WTC11 (cell line): ENCODE measurements at regions of chr1 and their contacts with region 1.

Region 1: DNA sequence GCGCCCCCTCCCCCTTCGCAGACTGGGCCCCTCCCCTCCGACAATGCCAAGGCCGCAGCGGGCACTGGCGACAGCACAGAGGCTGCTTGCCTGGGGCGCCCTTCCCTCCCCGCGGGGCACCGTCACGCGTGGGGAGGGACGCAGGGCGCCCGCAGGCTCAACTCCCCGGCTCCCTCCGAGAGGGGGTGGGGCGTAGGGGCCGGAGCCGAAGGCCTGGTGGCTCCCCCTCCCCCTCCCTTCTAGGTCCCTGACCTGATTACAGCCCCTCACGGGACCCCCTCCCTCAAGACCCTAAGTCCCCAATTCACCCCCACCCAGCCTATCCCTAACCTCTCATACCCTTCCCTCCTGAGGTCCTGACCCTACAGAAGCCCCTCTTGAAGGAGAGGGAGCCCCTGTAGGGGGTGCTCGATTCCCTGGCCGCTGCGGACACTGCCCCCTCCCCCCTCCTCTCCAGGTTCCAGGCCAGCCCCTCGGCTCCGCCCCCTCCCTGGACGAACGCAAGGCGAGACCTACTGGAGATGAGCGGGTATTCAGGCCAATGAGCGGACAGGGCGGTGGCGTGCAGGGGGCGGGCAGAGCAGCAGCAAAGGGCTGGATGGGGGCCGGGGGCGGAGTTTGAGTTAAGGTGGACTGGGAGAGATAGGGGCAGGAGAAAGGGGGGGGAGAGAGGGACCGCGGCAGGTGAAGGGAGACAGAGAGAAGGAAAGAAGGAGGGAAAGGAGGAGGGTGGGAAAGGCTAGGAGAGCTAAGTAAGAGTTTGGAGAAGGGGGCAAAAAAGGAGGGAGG is 733 bp upstream of the ZBTB7B start:
- DNase-seq: peak; percentile 100
- ATAC-seq: peak; percentile 73
- H3K4me3 Mint-ChIP-seq: peak overlapping the region; percentile 88
- H3K27ac Mint-ChIP-seq: peak overlapping the region; percentile 57; the same call in 1 of the 2 replicates
- H3K4me1 Mint-ChIP-seq: peaks cover 39% of the 10 kb centered on the region
- H3K27me3 Mint-ChIP-seq: no peaks in the 10 kb centered on the region; the same call in 1 of the 2 replicates
- CTCF ChIP-seq: no peak

Region 2: GRCh38 chr1:154955718-154956543 is 45.9 kb before region 1 on chr1 and contains the start of gene PBXIP1:
- CTCF ChIA-PET with region 1: interaction called, 77 read pairs
- POLR2A ChIA-PET with region 1: interaction called, 12 read pairs
- DNase-seq: peak; percentile 85
- ATAC-seq: peak; percentile 87
- H3K4me3 Mint-ChIP-seq: peak within 1 kb of the TSS; percentile 97
- H3K27ac Mint-ChIP-seq: peak within 1 kb of the TSS; percentile 99
- H3K4me1 Mint-ChIP-seq: peaks cover 53% of the 10 kb centered on the region
- H3K27me3 Mint-ChIP-seq: no peaks in the 10 kb centered on the region
- CTCF ChIP-seq: no peak
- total RNA-seq, gene PBXIP1: 26.5 to 30.7 TPM (median 28.4 TPM) in 3 replicates

Region 3: DNA sequence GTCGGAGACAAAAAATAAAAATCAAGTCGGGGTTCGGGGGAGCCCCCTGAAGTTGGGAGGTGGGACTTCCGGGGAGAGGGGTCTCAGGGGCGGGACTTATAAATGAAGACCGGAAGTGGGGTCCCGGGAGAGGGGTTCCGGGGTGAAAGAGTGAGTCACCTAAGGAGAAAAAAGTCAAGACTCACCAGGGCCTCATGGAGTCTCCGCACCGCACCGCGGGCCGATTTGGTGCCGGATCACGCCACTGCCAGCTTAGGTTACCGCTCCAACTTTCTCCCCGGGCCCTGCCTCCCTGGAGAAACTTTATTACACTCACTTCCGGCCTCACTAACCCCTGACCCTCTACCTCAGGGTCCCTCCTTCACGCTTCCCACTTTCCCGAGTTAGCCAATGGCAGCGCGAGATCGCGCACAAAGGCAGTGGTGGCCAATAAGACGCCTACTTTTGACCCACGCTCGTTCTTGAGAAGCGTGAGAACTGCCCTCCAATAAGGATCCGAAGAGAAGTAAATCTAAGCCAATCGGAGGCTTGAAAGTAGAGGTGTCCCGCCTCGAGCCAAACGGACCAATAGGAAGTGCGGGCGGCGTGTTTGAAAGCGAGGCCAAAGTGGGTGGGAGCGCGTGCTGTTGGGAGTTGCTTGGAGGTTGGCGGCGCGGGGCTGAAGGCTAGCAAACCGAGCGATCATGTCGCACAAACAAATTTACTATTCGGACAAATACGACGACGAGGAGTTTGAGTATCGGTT is 27.6 kb before region 1 on chr1 and contains the start of gene CKS1B:
- CTCF ChIA-PET with region 1: interaction called, 176 read pairs
- POLR2A ChIA-PET with region 1: interaction called, 176 read pairs
- DNase-seq: peak; percentile 96
- ATAC-seq: peak; percentile 62
- H3K4me3 Mint-ChIP-seq: no peak within 1 kb of the TSS
- H3K27ac Mint-ChIP-seq: no peak within 1 kb of the TSS
- H3K4me1 Mint-ChIP-seq: peaks cover 28% of the 10 kb centered on the region
- H3K27me3 Mint-ChIP-seq: no peaks in the 10 kb centered on the region
- CTCF ChIP-seq: no peak
- total RNA-seq, gene CKS1B: 258 to 301 TPM (median 278 TPM) in 3 replicates

Region 4: GRCh38 chr1:155012026-155012546 is 10.2 kb after region 1 on chr1:
- CTCF ChIA-PET with region 1: interaction called, 79 read pairs
- POLR2A ChIA-PET with region 1: interaction called, 28 read pairs
- DNase-seq: peak; percentile 88
- ATAC-seq: peak; percentile 78
- H3K4me3 Mint-ChIP-seq: peak overlapping the region; percentile 45
- H3K27ac Mint-ChIP-seq: peak overlapping the region; percentile 95
- H3K4me1 Mint-ChIP-seq: peaks cover 49% of the 10 kb centered on the region
- H3K27me3 Mint-ChIP-seq: no peaks in the 10 kb centered on the region
- CTCF ChIP-seq: no peak

Region 5: GRCh38 chr1:155050560-155051341 is 48.9 kb after region 1 on chr1 and contains the start of gene ADAM15:
- CTCF ChIA-PET with region 1: interaction called, 39 read pairs
- POLR2A ChIA-PET with region 1: interaction called, 3 read pairs
- DNase-seq: peak; percentile 92
- ATAC-seq: peak; percentile 72
- H3K4me3 Mint-ChIP-seq: peak within 1 kb of the TSS; percentile 82
- H3K27ac Mint-ChIP-seq: peak within 1 kb of the TSS; percentile 72; the same call in 1 of the 2 replicates
- H3K4me1 Mint-ChIP-seq: peaks cover 33% of the 10 kb centered on the region
- H3K27me3 Mint-ChIP-seq: peaks cover 20% of the 10 kb centered on the region
- CTCF ChIP-seq: peak; percentile 97
- total RNA-seq, gene ADAM15: 32.1 to 38.4 TPM (median 33.2 TPM) in 3 replicates